Mammary epithelial cell (primary cell): ENCODE measurements at regions of chr17 and their contacts with region 1.

Region 1: GRCh38 chr17:40075201-40075941 is 12.6 kb downstream of the THRA start:
- DNase-seq: peak; percentile 30
- H3K4me3 ChIP-seq: no peak overlapping the region
- H3K27ac ChIP-seq: no peak overlapping the region
- H3K4me1 ChIP-seq: peaks cover 31% of the 10 kb centered on the region
- H3K27me3 ChIP-seq: no peaks in the 10 kb centered on the region
- CTCF ChIP-seq: peak; percentile 77 to 94

Region 2: GRCh38 chr17:38844261-38844757 is 1231.1 kb before region 1 on chr17:
- CTCF ChIA-PET with region 1: interaction called, 21 read pairs
- dilution Hi-C with region 1: no loop called
- in situ Hi-C with region 1: no loop called
- intact Hi-C with region 1: no loop called
- DNase-seq: no peak
- H3K4me3 ChIP-seq: no peak overlapping the region
- H3K27ac ChIP-seq: no peak overlapping the region
- H3K4me1 ChIP-seq: no peaks in the 10 kb centered on the region
- H3K27me3 ChIP-seq: no peaks in the 10 kb centered on the region
- CTCF ChIP-seq: no peak